Cardiac septum (tissue), 1 donor: ENCODE measurements at regions of chr5 and their contacts with region 1.

Region 1: GRCh38 chr5:217860-218456 is at the starts of genes CCDC127 and SDHA:
- DNase-seq: peak; percentile 97
- total RNA-seq, gene CCDC127: 9.6 TPM
- total RNA-seq, gene SDHA: 580 TPM

Region 2: GRCh38 chr5:270340-270739 is 52.4 kb after region 1 on chr5:
- intact Hi-C with region 1: loop called (anchors 2 kb)
- DNase-seq: no peak